Endothelial cell of umbilical vein (primary cell): ENCODE measurements at regions of chr5 and their contacts with region 1.

Region 1: DNA sequence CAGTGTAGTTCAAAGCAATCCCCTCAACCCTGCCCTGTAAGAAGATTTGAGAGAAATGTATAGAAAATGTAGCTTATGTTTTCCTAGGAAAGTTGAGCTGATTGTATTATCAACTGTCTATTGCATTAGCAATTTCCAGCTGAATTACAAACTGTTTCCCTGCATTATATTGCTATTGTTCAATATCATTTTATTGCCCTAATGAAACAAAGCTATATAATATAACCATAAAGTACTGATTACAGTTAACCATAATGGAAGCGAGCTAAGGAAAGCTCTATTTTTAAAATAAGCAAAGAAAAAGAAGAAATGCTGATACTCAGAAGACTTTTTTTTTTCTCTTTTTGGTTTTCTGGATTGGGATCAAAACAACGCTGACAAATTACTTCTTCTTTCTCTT is 228.3 kb downstream of the EFNA5 start:
- DNase-seq: no peak
- H3K4me3 ChIP-seq: no peak overlapping the region
- H3K27ac ChIP-seq: no peak overlapping the region
- H3K4me1 ChIP-seq: no peaks in the 10 kb centered on the region
- H3K27me3 ChIP-seq: no peaks in the 10 kb centered on the region
- CTCF ChIP-seq: no peak
- POLR2A ChIP-seq: no peak

Region 2: GRCh38 chr5:107431998-107432397 is 10.5 kb before region 1 on chr5:
- CTCF ChIA-PET with region 1: interaction called, 10 read pairs
- POLR2A ChIA-PET with region 1: no interaction called
- dilution Hi-C with region 1: no loop called
- intact Hi-C with region 1: no loop called
- DNase-seq: peak; percentile 91
- H3K4me3 ChIP-seq: no peak overlapping the region
- H3K27ac ChIP-seq: peak overlapping the region; percentile 25
- H3K4me1 ChIP-seq: peaks cover 16% of the 10 kb centered on the region
- H3K27me3 ChIP-seq: no peaks in the 10 kb centered on the region
- CTCF ChIP-seq: no peak
- POLR2A ChIP-seq: no peak

Region 3: GRCh38 chr5:107496466-107496865 is 54.0 kb after region 1 on chr5:
- CTCF ChIA-PET with region 1: no interaction called
- POLR2A ChIA-PET with region 1: no interaction called
- dilution Hi-C with region 1: no loop called
- intact Hi-C with region 1: no loop called
- DNase-seq: no peak
- H3K4me3 ChIP-seq: no peak overlapping the region
- H3K27ac ChIP-seq: no peak overlapping the region
- H3K4me1 ChIP-seq: peaks cover 14% of the 10 kb centered on the region
- H3K27me3 ChIP-seq: no peaks in the 10 kb centered on the region
- CTCF ChIP-seq: no peak
- POLR2A ChIP-seq: no peak

Region 4: DNA sequence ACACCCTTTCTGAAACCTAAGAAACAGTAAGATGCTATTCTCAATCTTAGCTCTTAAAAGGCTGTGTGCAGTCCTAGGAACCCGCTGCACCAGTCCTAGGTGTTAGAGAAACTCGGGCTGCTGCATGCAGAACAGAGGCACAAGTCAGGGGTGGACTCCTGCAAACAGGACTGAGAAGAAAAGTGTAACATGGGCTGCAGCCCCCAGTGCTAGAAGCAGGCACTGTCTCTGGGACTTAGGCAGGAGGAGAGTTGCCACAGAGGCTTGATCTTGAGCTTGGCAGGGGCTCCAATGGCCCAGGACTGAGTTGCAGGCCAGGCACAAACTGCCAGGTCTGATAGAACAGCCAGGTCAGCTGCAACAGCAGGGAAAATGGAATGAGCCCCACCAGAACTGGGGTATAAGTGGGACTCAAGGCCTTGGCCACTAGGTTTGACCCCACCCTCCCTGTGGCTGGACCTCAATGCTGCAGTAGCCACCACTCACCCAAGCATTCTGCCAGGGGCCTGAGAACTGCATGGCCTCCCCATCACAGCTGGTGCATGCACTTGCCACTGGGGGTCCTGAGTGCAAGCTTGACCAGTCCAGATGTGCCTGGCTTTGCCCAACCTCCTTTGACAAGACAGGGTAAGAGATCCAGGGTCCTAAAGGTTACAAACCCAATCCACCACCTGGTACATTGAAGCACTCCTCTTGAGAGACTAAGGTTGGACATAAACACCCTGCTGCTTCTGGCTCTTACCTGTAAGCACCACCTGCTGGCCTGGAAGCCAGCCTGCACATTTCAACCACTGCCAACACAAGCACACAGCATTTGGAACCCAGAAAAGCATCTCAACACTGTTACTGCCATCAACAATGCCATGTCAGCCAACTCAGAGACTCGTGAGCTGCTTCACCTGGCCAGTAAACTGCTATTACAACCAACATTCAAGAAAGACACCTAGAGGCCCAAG is 836.1 kb after region 1 on chr5:
- CTCF ChIA-PET with region 1: no interaction called
- POLR2A ChIA-PET with region 1: no interaction called
- dilution Hi-C with region 1: no loop called
- intact Hi-C with region 1: no loop called
- DNase-seq: no peak
- H3K4me3 ChIP-seq: no peak overlapping the region
- H3K27ac ChIP-seq: no peak overlapping the region
- H3K4me1 ChIP-seq: no peaks in the 10 kb centered on the region
- H3K27me3 ChIP-seq: no peaks in the 10 kb centered on the region
- CTCF ChIP-seq: no peak
- POLR2A ChIP-seq: no peak